Mammary epithelial cell (primary cell): ENCODE measurements at regions of chr3 and their contacts with region 1.

Region 1: GRCh38 chr3:119463171-119464169 is at the start of gene TMEM39A:
- DNase-seq: peak; percentile 95
- H3K4me3 ChIP-seq: peak within 1 kb of the TSS; percentile 61 to 90 (median 83)
- H3K27ac ChIP-seq: peak within 1 kb of the TSS; percentile 84
- H3K4me1 ChIP-seq: peaks cover 20% of the 10 kb centered on the region
- H3K27me3 ChIP-seq: no peaks in the 10 kb centered on the region
- CTCF ChIP-seq: peak in 1 of 2 donors; percentile 7
- total RNA-seq, gene TMEM39A: 47.7 to 47.8 TPM

Region 2: DNA sequence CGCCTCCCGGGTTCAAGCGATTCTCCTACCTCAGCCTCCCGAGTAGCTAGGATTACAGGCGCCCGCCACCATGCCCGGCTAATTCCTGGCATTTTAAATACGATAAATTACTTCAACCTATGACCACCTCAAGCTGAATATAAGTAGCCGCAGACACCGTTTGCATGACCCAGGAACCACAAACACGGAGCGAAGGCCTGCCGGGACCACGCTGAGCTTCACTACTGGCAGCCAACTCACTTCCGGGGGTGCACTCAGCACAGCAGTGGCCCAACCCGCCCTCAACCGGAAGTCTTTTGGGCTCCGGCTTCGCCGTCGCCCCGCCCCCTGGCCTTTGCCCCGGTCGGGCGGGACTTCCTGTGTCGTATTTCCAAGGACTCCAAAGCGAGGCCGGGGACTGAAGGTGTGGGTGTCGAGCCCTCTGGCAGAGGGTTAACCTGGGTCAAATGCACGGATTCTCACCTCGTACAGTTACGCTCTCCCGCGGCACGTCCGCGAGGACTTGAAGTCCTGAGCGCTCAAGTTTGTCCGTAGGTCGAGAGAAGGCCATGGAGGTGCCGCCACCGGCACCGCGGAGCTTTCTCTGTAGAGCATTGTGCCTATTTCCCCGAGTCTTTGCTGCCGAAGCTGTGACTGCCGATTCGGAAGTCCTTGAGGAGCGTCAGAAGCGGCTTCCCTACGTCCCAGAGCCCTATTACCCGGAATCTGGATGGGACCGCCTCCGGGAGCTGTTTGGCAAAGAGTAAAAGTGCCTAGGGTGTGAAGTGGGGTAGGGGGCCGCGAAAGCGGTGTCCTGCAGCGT is 34.9 kb after region 1 on chr3 and contains the start of gene TIMMDC1:
- CTCF ChIA-PET with region 1: no interaction called
- dilution Hi-C with region 1: no loop called
- in situ Hi-C with region 1: no loop called
- intact Hi-C with region 1: loop called (anchors 1 kb)
- DNase-seq: peak; percentile 96
- H3K4me3 ChIP-seq: peak within 1 kb of the TSS; percentile 70 to 95 (median 92)
- H3K27ac ChIP-seq: peak within 1 kb of the TSS; percentile 89
- H3K4me1 ChIP-seq: peaks cover 21% of the 10 kb centered on the region
- H3K27me3 ChIP-seq: no peaks in the 10 kb centered on the region
- CTCF ChIP-seq: no peak
- total RNA-seq, gene TIMMDC1: 55.5 to 127 TPM